Activated CD8-positive, alpha-beta memory T cell treated with anti-CD3 and anti-CD28 coated beads, Interleukin-2, amount 10 ng/mL, durations not matched to agents 7 days and 5 days (primary cell): ENCODE measurements at regions of chr11 and their contacts with region 1.

Region 1: DNA sequence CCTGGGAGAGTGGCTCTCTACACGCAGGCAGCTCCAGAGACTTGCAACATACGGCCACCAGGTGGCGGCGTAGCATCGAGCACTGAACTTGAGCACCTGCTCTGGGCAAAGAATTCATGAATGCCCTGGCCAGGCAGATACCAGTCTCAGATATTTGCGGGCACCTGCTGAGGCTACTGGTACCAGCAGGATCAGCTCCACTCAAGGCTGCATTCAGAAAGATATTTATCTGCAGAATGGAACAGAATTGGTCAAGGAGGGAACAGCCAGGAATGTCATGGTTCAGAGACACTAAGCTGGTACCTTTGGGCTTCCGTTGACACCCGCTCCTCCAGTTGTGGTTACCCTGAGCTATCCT is 10.8 kb upstream of the CCDC86 start:
- DNase-seq: peak; percentile 87
- ATAC-seq: peak; percentile 91
- H3K4me3 Mint-ChIP-seq: no peak overlapping the region
- H3K27ac Mint-ChIP-seq: no peak overlapping the region
- H3K4me1 Mint-ChIP-seq: peaks cover 33% of the 10 kb centered on the region
- H3K27me3 Mint-ChIP-seq: peaks cover 17% of the 10 kb centered on the region

Region 2: GRCh38 chr11:60775420-60775961 is 55.6 kb before region 1 on chr11:
- CTCF ChIA-PET with region 1: interaction called, 30 read pairs
- DNase-seq: peak; percentile 87
- ATAC-seq: peak; percentile 88
- H3K4me3 Mint-ChIP-seq: no peak overlapping the region
- H3K27ac Mint-ChIP-seq: no peak overlapping the region
- H3K4me1 Mint-ChIP-seq: peaks cover 5% of the 10 kb centered on the region
- H3K27me3 Mint-ChIP-seq: peaks cover 10% of the 10 kb centered on the region

Region 3: GRCh38 chr11:60848714-60849151 is 17.6 kb after region 1 on chr11:
- CTCF ChIA-PET with region 1: interaction called, 20 read pairs
- DNase-seq: no peak
- ATAC-seq: no peak
- H3K4me3 Mint-ChIP-seq: no peak overlapping the region
- H3K27ac Mint-ChIP-seq: no peak overlapping the region
- H3K4me1 Mint-ChIP-seq: peaks cover 18% of the 10 kb centered on the region
- H3K27me3 Mint-ChIP-seq: no peaks in the 10 kb centered on the region

Region 4: GRCh38 chr11:60872961-60873524 is 41.9 kb after region 1 on chr11:
- CTCF ChIA-PET with region 1: interaction called, 67 read pairs
- DNase-seq: no peak
- ATAC-seq: no peak
- H3K4me3 Mint-ChIP-seq: no peak overlapping the region
- H3K27ac Mint-ChIP-seq: no peak overlapping the region
- H3K4me1 Mint-ChIP-seq: peaks cover 62% of the 10 kb centered on the region
- H3K27me3 Mint-ChIP-seq: no peaks in the 10 kb centered on the region

Region 5: DNA sequence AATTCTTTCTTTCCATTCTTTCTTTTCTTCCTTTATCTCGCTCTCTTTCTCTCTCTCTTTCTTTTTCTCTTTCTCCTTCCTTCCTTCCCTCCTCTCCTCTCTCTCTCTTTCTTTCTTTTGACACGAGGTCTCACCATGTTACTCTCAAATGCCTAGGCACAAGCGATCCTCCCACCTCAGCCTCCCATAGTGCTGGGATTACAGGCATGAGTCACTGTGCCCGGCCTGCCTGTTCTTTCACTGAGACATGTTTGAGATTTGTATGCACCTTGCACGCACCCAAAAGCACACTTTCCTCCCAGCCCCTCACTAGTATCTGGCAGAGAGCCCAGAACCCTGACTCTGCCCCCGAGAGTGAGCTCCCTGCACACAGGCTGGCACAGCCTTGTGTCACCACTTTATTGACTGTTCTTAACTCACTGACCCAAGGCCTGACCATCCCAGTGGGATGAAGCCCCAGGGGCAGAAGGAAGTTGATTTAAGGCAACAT is 197.2 kb after region 1 on chr11:
- CTCF ChIA-PET with region 1: no interaction called
- DNase-seq: peak; percentile 68
- ATAC-seq: peak; percentile 37
- H3K4me3 Mint-ChIP-seq: peak overlapping the region; percentile 57
- H3K27ac Mint-ChIP-seq: peak overlapping the region; percentile 84
- H3K4me1 Mint-ChIP-seq: peaks cover 63% of the 10 kb centered on the region
- H3K27me3 Mint-ChIP-seq: no peaks in the 10 kb centered on the region

Region 6: DNA sequence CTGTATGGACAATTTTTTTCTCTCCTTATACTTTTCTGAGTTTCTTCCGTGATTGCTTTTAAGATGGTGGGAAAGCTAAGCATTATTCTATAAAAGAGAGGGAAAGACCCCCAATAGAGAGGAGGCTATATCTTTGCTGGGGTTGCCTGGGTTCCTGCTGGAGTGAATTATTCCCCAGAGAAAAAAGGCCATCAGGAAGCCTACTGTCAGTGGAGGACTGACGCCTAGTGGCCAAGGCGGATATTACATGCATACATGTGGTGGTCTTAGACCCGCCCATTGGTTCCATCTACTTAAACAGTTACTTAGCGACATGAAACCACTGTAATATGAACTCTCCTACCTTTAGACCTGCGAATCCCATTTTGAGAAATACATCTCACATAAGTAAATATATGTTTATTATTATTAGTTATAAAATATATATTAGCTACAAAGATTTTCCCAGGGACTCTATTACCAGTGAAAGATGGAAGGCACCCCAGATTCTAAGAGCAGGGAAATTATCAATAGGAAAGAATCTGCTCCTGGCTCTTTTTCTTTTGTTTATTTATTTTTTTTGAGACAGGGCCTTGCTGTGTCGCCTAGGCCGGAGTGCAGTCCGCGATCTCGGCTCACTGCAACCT is 356.5 kb after region 1 on chr11:
- CTCF ChIA-PET with region 1: interaction called, 26 read pairs
- DNase-seq: peak; percentile 84
- ATAC-seq: peak; percentile 95
- H3K4me3 Mint-ChIP-seq: no peak overlapping the region
- H3K27ac Mint-ChIP-seq: no peak overlapping the region
- H3K4me1 Mint-ChIP-seq: peaks cover 2% of the 10 kb centered on the region
- H3K27me3 Mint-ChIP-seq: peaks cover 10% of the 10 kb centered on the region